ENCODE measurements at regions of chr13 and their contacts with region 1.

Region 1: GRCh38 chr13:40102856-40103255 is 447.4 kb downstream of the COG6 start:
- DNase-seq: no peak
- H3K4me3 Mint-ChIP-seq: peak overlapping the region; percentile 60
- H3K27ac Mint-ChIP-seq: peak overlapping the region; percentile 96
- H3K4me1 Mint-ChIP-seq: peaks cover 47% of the 10 kb centered on the region
- H3K27me3 Mint-ChIP-seq: no peaks in the 10 kb centered on the region

Region 2: GRCh38 chr13:39777527-39778061 is 325.3 kb before region 1 on chr13:
- intact Hi-C with region 1: loop called (anchors 1 kb)
- DNase-seq: no peak
- H3K4me3 Mint-ChIP-seq: no peak overlapping the region
- H3K27ac Mint-ChIP-seq: peak overlapping the region; percentile 86
- H3K4me1 Mint-ChIP-seq: peaks cover 50% of the 10 kb centered on the region
- H3K27me3 Mint-ChIP-seq: no peaks in the 10 kb centered on the region

Region 3: DNA sequence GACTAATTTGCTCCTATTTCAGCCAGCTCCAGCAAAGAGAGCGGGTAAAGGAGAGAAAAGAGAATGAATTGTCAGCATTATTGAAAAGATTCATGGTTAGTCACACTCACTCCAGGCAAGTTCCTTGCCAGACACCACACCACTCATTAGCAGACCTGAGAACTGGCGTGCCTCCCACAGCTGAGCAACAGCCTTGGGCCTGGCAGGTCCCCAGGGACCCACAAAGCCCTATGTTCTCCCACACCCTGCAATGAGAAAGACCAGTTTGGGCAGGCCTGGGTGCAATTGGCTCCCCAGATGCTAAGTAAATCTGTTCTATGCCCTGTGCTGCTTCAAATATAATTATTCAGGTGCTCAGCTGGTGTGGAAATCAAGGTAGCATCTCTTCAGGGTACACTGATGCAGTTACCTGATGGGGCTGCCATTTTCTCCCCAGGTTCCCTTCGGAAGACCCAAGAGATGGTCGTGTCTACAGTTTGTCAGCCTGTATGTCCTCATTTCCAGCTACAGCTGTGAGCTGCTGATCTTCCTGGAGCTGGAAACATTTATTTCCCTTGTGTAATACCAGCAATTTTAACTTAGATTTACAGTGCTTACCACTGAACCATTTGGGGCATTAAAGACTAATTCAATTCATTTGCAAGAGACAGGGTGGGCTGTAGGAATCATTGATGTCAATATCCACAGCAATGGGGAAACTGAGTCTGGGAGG is 42.4 kb before region 1 on chr13:
- intact Hi-C with region 1: loop called (anchors 2 kb)
- DNase-seq: no peak
- H3K4me3 Mint-ChIP-seq: no peak overlapping the region
- H3K27ac Mint-ChIP-seq: peak overlapping the region; percentile 56
- H3K4me1 Mint-ChIP-seq: peaks cover 38% of the 10 kb centered on the region
- H3K27me3 Mint-ChIP-seq: no peaks in the 10 kb centered on the region

Region 4: GRCh38 chr13:40190641-40191100 is 87.8 kb after region 1 on chr13:
- intact Hi-C with region 1: loop called (anchors 2 kb)
- DNase-seq: peak; percentile 55
- H3K4me3 Mint-ChIP-seq: peak overlapping the region; percentile 31
- H3K27ac Mint-ChIP-seq: peak overlapping the region; percentile 79
- H3K4me1 Mint-ChIP-seq: peaks cover 59% of the 10 kb centered on the region
- H3K27me3 Mint-ChIP-seq: peaks cover 2% of the 10 kb centered on the region

Region 5: DNA sequence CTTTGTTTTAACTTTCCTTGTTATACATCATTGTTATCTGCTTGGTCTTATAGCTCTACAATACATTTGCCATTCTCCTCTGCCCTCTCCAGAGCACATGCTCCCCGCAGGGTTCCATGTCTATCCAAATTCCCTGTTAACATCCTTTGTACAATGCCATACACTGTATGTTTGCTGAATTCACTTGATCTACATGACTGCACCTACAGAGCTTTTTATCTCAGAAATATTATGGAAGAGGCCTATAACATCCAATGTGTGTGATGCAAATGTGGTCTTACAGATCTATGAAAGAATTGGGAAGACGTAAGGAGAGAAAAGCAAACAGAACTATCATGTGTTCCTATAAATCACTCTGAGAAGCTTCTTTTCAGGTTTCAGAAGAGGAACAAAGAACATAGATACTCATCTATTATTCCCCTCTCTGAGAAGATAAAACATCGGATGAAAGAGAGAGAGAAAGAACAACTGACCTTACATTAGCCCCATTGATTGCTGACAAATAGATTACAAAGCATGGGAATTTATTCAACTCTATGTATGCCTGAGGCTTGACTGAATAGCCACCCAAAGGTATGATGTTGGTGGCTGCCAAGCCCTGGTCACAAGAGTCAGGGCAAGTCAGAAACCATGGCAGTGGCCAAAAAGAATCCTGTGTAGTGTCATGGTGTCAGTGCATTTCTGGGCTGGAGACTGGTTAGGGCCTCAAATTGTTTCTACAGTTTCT is 138.4 kb after region 1 on chr13:
- intact Hi-C with region 1: no loop called
- DNase-seq: no peak
- H3K4me3 Mint-ChIP-seq: no peak overlapping the region
- H3K27ac Mint-ChIP-seq: no peak overlapping the region
- H3K4me1 Mint-ChIP-seq: peaks cover 6% of the 10 kb centered on the region
- H3K27me3 Mint-ChIP-seq: no peaks in the 10 kb centered on the region

Region 6: GRCh38 chr13:40251343-40252032 is 148.6 kb after region 1 on chr13:
- intact Hi-C with region 1: loop called (anchors 1 kb)
- DNase-seq: no peak
- H3K4me3 Mint-ChIP-seq: no peak overlapping the region
- H3K27ac Mint-ChIP-seq: peak overlapping the region; percentile 75
- H3K4me1 Mint-ChIP-seq: peaks cover 32% of the 10 kb centered on the region
- H3K27me3 Mint-ChIP-seq: no peaks in the 10 kb centered on the region

Region 7: GRCh38 chr13:40292108-40292507 is 189.3 kb after region 1 on chr13:
- intact Hi-C with region 1: no loop called
- DNase-seq: no peak
- H3K4me3 Mint-ChIP-seq: no peak overlapping the region
- H3K27ac Mint-ChIP-seq: no peak overlapping the region
- H3K4me1 Mint-ChIP-seq: peaks cover 8% of the 10 kb centered on the region
- H3K27me3 Mint-ChIP-seq: no peaks in the 10 kb centered on the region

Region 8: GRCh38 chr13:40517486-40518480 is 414.9 kb after region 1 on chr13:
- intact Hi-C with region 1: loop called (anchors 2 kb)
- DNase-seq: no peak
- H3K4me3 Mint-ChIP-seq: peak overlapping the region; percentile 42
- H3K27ac Mint-ChIP-seq: peak overlapping the region; percentile 81
- H3K4me1 Mint-ChIP-seq: peaks cover 57% of the 10 kb centered on the region
- H3K27me3 Mint-ChIP-seq: no peaks in the 10 kb centered on the region

Measured in activated T-helper 2 cell treated with anti-CD3 and anti-CD28 coated beads, Interferon-gamma antibody, Interleukin-2, Interleukin-4, amounts not matched to agents 10 μg/mL and 5 μg/mL and 100 μg/mL, durations not matched to agents 14 hours and 24 hours and 36 hours (primary cell).